Naive thymus-derived CD4-positive, alpha-beta T cell (primary cell): ENCODE measurements at regions of chr5 and their contacts with region 1.

Region 1: GRCh38 chr5:14644623-14645237 is 19.8 kb upstream of the OTULIN start:
- DNase-seq: no peak
- ATAC-seq: no peak
- H3K4me3 ChIP-seq: no peak overlapping the region
- H3K4me3 Mint-ChIP-seq: no peak overlapping the region
- H3K27ac ChIP-seq: no peak overlapping the region
- H3K27ac Mint-ChIP-seq: no peak overlapping the region
- H3K4me1 ChIP-seq: no peaks in the 10 kb centered on the region
- H3K4me1 Mint-ChIP-seq: peaks cover 0 to 8% (median 0%) of the 10 kb centered on the region in 7 donors
- H3K27me3 ChIP-seq: no peaks in the 10 kb centered on the region
- H3K27me3 Mint-ChIP-seq: peaks cover 5 to 42% (median 18%) of the 10 kb centered on the region in 5 donors

Region 2: DNA sequence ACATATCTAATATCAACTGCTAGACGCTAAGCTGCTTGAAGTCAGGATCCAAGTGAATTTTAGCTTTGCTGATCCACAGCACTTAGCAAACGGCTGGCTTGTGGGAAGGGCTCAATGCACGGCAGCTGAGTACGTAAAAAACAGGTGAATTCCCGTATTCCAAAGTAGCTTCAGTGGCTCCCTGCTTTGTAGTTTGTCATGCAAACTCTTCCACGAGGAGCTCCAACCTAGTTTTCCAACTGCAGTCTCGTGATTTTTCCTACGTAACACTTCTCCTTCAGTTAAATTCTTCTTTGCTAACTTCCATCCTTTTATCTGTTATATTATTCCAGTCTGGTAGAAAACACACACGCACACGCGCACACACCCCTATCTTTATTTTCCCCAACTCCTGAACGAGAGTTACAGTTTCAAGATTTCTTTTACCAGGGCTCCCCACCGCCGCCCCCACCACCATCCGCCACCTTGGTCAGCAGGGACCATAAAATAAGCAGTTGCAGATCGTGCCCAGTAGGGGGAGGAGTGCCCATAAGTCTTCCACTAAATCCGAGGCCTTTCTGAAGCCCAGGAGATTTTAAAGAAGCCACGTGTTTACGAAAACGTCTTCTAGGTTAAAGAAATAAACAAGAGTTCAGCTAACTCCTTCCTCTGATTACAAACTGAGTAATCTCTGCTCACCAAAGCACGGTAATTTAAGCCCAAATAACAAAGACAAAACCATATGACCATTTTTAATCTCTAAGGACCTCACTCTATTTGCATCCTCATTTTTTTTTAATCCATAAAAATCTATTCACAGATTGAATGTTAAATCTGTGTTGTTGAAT is 536.3 kb before region 1 on chr5:
- CTCF ChIA-PET with region 1: no interaction called
- POLR2A ChIA-PET with region 1: no interaction called
- intact Hi-C with region 1: loop called in 1 of 2 experiments (anchors 1 kb)
- DNase-seq: peak in 6 of 9 donors; percentile 4 to 37 (median 20)
- ATAC-seq: peak; percentile 80
- H3K4me3 ChIP-seq: no peak overlapping the region
- H3K4me3 Mint-ChIP-seq: peak overlapping the region in 6 of 10 donors; percentile 2 to 39 (median 22)
- H3K27ac ChIP-seq: no peak overlapping the region
- H3K27ac Mint-ChIP-seq: peak overlapping the region in 1 of 9 donors; percentile 0
- H3K4me1 ChIP-seq: no peaks in the 10 kb centered on the region
- H3K4me1 Mint-ChIP-seq: peaks cover 0 to 19% (median 4%) of the 10 kb centered on the region in 7 donors
- H3K27me3 ChIP-seq: no peaks in the 10 kb centered on the region
- H3K27me3 Mint-ChIP-seq: peaks cover 9 to 27% (median 23%) of the 10 kb centered on the region in 5 donors

Region 3: DNA sequence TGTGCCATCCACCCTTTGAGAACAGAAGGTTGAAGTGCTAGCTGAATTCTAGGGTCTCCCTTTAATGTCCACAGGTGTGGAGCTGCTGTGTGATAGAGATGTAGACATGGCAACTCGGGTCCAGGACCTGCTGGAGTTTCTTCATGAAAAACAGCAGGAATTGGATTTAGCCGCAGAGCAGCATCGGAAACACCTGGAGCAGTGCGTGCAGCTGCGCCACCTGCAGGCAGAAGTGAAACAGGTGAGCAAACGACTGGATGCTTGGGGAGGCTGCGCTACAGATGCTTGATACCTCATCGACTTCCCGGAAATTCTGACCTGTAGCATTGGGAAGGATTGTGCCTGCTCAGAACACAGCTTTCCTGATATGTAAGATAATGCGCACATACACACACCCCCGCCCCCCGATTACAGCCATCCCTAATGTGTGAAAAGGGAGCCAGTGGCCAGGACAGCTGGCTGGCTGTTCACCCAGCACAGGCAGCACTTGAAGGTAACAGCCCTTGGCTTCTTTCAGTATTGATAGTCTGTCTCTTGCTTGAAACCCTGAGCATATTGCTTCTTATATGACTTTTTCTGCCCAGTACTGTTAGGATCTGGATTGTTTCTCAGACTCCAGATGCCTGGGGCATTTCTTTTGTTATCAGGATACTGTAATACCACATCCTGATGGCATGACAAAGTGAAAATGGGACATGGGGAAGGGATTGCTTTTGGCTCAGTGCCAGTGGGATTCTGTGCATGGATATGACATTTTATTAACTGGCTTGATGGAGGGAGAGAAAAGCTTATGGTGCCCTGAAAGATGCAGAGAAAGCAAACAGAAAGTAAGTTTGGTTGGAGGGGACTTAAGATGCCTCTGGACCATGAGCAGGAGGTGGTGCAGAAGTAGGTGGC is 279.9 kb before region 1 on chr5:
- CTCF ChIA-PET with region 1: interaction called, 124 read pairs
- POLR2A ChIA-PET with region 1: interaction called, 3 read pairs
- intact Hi-C with region 1: loop called (anchors 1 kb)
- DNase-seq: no peak
- ATAC-seq: no peak
- H3K4me3 ChIP-seq: no peak overlapping the region
- H3K4me3 Mint-ChIP-seq: peak overlapping the region in 1 of 10 donors; percentile 48
- H3K27ac ChIP-seq: no peak overlapping the region
- H3K27ac Mint-ChIP-seq: peak overlapping the region in 4 of 9 donors; percentile 13 to 73 (median 46)
- H3K4me1 ChIP-seq: peaks cover 9 to 12% of the 10 kb centered on the region in 2 donors
- H3K4me1 Mint-ChIP-seq: peaks cover 17 to 55% (median 28%) of the 10 kb centered on the region in 7 donors
- H3K27me3 ChIP-seq: no peaks in the 10 kb centered on the region
- H3K27me3 Mint-ChIP-seq: no peaks in the 10 kb centered on the region

Region 4: DNA sequence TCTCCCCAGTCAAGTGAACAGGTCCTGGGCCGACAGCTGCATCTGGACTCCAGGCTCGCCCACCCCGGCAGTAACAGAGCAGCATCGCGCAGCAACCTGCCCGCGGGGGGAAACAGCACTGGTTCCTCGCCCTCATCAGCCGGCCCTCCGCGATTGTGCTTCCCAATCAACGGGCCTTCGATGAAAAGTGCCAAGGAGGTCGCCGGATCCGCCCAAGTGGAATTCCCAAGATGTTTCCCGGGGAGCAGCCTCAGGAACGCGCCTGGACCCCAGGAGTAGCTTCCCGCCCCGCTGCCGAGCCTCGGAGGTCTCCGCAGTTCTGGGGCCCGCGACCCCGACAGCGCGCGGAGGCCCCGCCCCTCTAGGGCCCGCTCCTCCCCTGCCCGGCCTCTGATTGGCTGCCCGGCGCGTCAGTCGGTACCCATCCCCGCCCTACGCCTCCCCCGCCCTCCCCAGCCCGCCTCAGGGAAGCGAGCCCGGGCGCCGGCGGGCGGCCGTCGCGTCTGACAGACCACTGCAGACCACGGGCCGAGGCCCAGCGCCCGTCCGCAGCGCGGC is 63.3 kb before region 1 on chr5 and contains the start of gene OTULINL:
- CTCF ChIA-PET with region 1: interaction called, 6 read pairs
- POLR2A ChIA-PET with region 1: interaction called, 4 read pairs
- intact Hi-C with region 1: loop called (anchors 1 to 5 kb)
- DNase-seq: peak; percentile 72 to 90 (median 86)
- ATAC-seq: peak; percentile 92
- H3K4me3 ChIP-seq: peak within 1 kb of the TSS; percentile 82
- H3K4me3 Mint-ChIP-seq: peak within 1 kb of the TSS; percentile 83 to 91 (median 88)
- H3K27ac ChIP-seq: peak within 1 kb of the TSS; percentile 75
- H3K27ac Mint-ChIP-seq: peak within 1 kb of the TSS; percentile 78 to 96 (median 89)
- H3K4me1 ChIP-seq: peaks cover 24 to 27% of the 10 kb centered on the region in 2 donors
- H3K4me1 Mint-ChIP-seq: peaks cover 30 to 51% (median 44%) of the 10 kb centered on the region in 7 donors
- H3K27me3 ChIP-seq: no peaks in the 10 kb centered on the region
- H3K27me3 Mint-ChIP-seq: peaks cover 0 to 27% (median 0%) of the 10 kb centered on the region in 5 donors
- total RNA-seq, gene OTULINL: 26.1 to 44.7 (median 32.4) TPM

Region 5: GRCh38 chr5:14706615-14707021 is 61.9 kb after region 1 on chr5:
- CTCF ChIA-PET with region 1: no interaction called
- POLR2A ChIA-PET with region 1: no interaction called
- intact Hi-C with region 1: no loop called
- DNase-seq: peak in 8 of 9 donors; percentile 33 to 88 (median 84)
- ATAC-seq: peak; percentile 96
- H3K4me3 ChIP-seq: peak overlapping the region; percentile 4
- H3K4me3 Mint-ChIP-seq: peak overlapping the region; percentile 74 to 94 (median 86)
- H3K27ac ChIP-seq: peak overlapping the region; percentile 72
- H3K27ac Mint-ChIP-seq: peak overlapping the region; percentile 96 to 100 (median 99)
- H3K4me1 ChIP-seq: peaks cover 34 to 75% of the 10 kb centered on the region in 2 donors
- H3K4me1 Mint-ChIP-seq: peaks cover 50 to 96% (median 86%) of the 10 kb centered on the region in 7 donors
- H3K27me3 ChIP-seq: no peaks in the 10 kb centered on the region
- H3K27me3 Mint-ChIP-seq: no peaks in the 10 kb centered on the region

Region 6: GRCh38 chr5:15013654-15014463 is 369.1 kb after region 1 on chr5:
- CTCF ChIA-PET with region 1: no interaction called
- POLR2A ChIA-PET with region 1: no interaction called
- intact Hi-C with region 1: loop called in 1 of 2 experiments (anchors 1 kb)
- DNase-seq: peak in 5 of 9 donors; percentile 15 to 41 (median 31)
- ATAC-seq: peak; percentile 73
- H3K4me3 ChIP-seq: no peak overlapping the region
- H3K4me3 Mint-ChIP-seq: no peak overlapping the region
- H3K27ac ChIP-seq: no peak overlapping the region
- H3K27ac Mint-ChIP-seq: no peak overlapping the region
- H3K4me1 ChIP-seq: no peaks in the 10 kb centered on the region
- H3K4me1 Mint-ChIP-seq: no peaks in the 10 kb centered on the region
- H3K27me3 ChIP-seq: no peaks in the 10 kb centered on the region
- H3K27me3 Mint-ChIP-seq: peaks cover 0 to 7% (median 0%) of the 10 kb centered on the region in 5 donors